IMR-90 (cell line): ENCODE measurements at regions of chr3 and their contacts with region 1.

Region 1: GRCh38 chr3:184261270-184261853 is at the start of gene CAMK2N2:
- DNase-seq: peak; percentile 47
- ATAC-seq: peak; percentile 84
- H3K4me3 ChIP-seq: peak within 1 kb of the TSS; percentile 55
- H3K27ac ChIP-seq: no peak within 1 kb of the TSS; the same call in 1 of the 2 replicates
- H3K4me1 ChIP-seq: peaks cover 2% of the 10 kb centered on the region; the same call in 1 of the 2 replicates
- H3K27me3 ChIP-seq: peaks cover 37% of the 10 kb centered on the region
- CTCF ChIP-seq: no peak
- POLR2A ChIP-seq: no peak
- RAD21 ChIP-seq: no peak
- total RNA-seq, gene CAMK2N2: not detected in 2 replicates

Region 2: DNA sequence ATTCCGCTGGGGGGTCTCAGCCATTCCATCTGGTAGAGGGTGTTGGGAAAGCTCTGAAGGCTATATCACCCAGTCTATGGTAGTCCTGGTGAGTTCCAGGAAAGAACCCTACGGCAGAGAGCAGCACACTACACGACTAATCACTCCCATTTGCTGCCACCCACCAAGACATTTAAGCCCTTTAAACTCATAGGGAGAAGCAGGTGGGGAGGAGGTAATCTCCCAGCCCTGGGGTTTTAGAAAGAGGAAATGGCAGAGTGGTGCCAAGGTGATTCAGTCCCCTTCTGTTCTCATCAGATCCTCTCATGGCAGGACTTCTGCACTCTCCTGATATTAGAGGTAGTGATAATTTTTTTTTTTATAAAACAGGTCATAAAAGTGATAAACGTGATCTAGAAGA is 42.5 kb before region 1 on chr3:
- CTCF ChIA-PET with region 1: no interaction called
- POLR2A ChIA-PET with region 1: no interaction called
- dilution Hi-C with region 1: no loop called
- in situ Hi-C with region 1: no loop called
- intact Hi-C with region 1: no loop called
- DNase-seq: no peak
- ATAC-seq: no peak
- H3K4me3 ChIP-seq: no peak overlapping the region
- H3K27ac ChIP-seq: no peak overlapping the region
- H3K4me1 ChIP-seq: no peaks in the 10 kb centered on the region
- H3K27me3 ChIP-seq: peaks cover 3% of the 10 kb centered on the region; the same call in 1 of the 2 replicates
- CTCF ChIP-seq: no peak
- POLR2A ChIP-seq: no peak
- RAD21 ChIP-seq: no peak

Region 3: DNA sequence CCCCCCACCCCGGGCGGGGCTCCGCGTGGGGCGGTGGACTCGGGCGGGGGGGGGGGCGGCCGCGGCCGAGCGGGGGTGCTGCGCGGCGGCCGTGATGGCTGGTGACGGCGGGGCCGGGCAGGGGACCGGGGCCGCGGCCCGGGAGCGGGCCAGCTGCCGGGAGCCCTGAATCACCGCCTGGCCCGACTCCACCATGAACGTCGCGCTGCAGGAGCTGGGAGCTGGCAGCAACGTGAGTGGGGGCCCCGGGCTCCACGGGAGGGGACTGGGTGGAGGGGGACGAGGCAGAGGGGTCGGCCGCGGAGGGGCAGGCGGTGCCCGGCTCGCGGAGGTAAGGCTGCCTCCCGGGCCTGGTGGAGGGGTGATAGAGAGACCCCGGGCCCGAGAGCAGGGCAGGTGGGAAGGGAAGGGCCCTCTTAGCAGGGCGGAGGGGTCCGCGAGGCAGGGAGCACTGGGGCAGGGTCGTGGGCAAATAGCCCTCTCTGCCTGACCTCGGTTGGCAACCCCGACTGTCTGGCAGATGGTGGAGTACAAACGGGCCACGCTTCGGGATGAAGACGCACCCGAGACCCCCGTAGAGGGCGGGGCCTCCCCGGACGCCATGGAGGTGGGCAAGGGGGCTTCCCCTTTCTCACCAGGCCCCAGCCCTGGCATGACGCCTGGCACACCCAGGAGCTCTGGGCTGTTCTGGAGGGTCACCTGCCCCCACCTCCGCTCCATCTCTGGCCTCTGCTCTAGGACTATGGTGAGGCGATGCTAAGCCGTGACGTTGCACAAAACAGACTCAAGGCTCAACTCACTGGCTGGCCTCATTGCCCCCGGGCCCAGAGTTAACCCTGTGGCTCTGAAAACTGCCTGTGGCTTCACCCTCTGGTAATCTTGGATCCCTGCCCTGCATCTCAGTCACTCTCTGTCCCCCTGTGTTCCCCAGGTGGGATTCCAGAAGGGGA is 14.9 kb after region 1 on chr3 and contains the start of gene ECE2:
- CTCF ChIA-PET with region 1: no interaction called
- POLR2A ChIA-PET with region 1: interaction called, 16 read pairs
- dilution Hi-C with region 1: no loop called
- in situ Hi-C with region 1: no loop called
- intact Hi-C with region 1: no loop called
- DNase-seq: no peak
- ATAC-seq: peak; percentile 81
- H3K4me3 ChIP-seq: no peak within 1 kb of the TSS
- H3K27ac ChIP-seq: no peak within 1 kb of the TSS
- H3K4me1 ChIP-seq: no peaks in the 10 kb centered on the region
- H3K27me3 ChIP-seq: peaks cover 57% of the 10 kb centered on the region
- CTCF ChIP-seq: no peak
- POLR2A ChIP-seq: no peak
- RAD21 ChIP-seq: no peak
- total RNA-seq, gene ECE2: not detected in 2 replicates

Region 4: DNA sequence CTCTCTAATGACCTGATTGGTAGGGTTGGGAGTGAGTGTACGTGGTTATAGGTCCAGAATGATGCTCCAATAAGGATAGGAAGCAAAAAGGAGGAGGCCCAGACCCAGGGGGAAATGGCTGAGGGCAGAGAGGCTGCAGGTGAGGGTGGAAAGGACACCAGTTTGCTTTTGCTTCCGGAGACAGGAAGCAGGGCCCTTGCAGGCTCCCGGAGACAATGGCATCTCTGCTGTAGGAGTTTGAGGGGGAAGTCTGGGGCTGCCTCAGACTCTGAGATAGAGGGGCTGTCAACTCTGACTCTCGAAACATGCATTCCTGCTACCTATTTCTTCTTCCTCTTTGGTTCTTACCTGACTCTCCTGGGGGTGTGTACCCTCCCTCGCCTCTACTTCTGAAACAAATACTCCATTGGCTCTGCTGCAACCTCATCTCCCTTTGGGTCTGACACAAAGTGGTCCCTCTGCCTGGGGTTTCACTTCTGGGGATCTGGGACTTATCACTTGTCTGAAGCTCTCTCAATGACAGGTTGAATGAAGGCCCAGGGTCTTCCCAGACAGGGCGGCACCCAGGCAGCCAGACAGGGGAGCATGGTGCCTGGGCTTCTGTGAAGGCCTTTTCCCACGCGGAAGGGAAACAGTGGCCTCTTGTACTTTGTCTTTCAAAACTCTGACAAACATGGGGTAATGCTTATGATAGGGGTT is 180.0 kb after region 1 on chr3:
- CTCF ChIA-PET with region 1: no interaction called
- POLR2A ChIA-PET with region 1: interaction called, 17 read pairs
- dilution Hi-C with region 1: no loop called
- in situ Hi-C with region 1: no loop called
- intact Hi-C with region 1: no loop called
- DNase-seq: no peak
- ATAC-seq: no peak
- H3K4me3 ChIP-seq: no peak overlapping the region
- H3K27ac ChIP-seq: no peak overlapping the region
- H3K4me1 ChIP-seq: no peaks in the 10 kb centered on the region
- H3K27me3 ChIP-seq: peaks cover 34% of the 10 kb centered on the region
- CTCF ChIP-seq: no peak
- POLR2A ChIP-seq: no peak
- RAD21 ChIP-seq: no peak